Dorsolateral prefrontal cortex (tissue), 120 donors: ENCODE measurements at regions of chr2 and their contacts with region 1.

Region 1: GRCh38 chr2:132665401-132666140 is 4.4 kb downstream of the LYPD1 start:
- DNase-seq: no peak
- H3K4me3 ChIP-seq: no peak overlapping the region
- H3K27ac ChIP-seq: no peak overlapping the region
- H3K27me3 ChIP-seq: peaks cover 0 to 50% (median 19%) of the 10 kb centered on the region in 45 donors
- CTCF ChIP-seq: no peak

Region 2: DNA sequence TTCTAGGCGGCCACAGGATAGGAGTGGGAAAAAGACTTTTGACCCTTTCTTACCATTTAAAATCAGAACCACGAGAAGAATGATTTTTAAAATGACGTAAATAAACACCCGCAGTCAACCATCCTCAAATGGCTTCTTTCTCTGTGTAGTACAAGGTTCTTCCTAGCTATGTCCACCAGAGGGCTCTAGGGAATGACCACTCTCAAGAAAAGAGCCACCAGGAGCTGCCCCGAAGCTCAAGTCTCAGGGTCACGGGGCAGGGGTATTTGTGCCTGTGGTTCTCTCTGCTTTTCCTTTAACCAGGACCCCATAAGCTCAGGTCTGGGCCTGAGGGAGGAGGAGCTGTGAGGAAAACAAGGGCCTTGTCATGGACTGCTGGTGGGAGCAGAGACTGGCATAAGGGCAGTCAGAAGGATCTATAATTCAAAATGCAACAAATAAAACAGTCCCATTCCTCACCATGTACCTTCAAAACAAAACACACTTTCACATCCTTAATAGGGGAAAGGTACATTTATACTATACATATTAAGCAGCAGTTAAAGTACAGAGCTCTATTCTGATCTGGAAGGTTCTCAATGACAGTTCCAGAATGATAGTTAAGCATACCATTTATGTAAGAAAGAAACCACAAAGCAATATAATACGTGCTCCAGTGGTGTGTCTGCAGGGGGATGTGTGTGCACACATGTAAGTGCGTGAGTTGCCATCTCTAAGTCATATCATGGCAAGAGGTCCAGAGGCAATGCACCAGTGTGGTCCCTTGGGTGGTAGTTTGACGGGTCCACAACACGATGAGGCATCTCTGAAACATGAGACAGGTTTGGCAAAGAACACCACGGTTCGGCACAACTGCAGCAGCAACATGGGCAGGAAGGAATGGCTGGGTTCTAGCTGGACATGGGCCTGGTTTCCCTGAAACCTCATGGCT is 14.2 kb before region 1 on chr2:
- intact Hi-C with region 1: loop called in 1 of 2 experiments (anchors 1 kb)
- DNase-seq: no peak
- H3K4me3 ChIP-seq: peak overlapping the region in 7 of 59 donors; percentile 9 to 43 (median 29)
- H3K27ac ChIP-seq: no peak overlapping the region
- H3K27me3 ChIP-seq: peaks cover 0 to 4% (median 0%) of the 10 kb centered on the region in 45 donors
- CTCF ChIP-seq: peak in 43 of 56 donors; percentile 38 to 87 (median 64)